ENCODE measurements at regions of chr7 and their contacts with region 1.

Region 1: DNA sequence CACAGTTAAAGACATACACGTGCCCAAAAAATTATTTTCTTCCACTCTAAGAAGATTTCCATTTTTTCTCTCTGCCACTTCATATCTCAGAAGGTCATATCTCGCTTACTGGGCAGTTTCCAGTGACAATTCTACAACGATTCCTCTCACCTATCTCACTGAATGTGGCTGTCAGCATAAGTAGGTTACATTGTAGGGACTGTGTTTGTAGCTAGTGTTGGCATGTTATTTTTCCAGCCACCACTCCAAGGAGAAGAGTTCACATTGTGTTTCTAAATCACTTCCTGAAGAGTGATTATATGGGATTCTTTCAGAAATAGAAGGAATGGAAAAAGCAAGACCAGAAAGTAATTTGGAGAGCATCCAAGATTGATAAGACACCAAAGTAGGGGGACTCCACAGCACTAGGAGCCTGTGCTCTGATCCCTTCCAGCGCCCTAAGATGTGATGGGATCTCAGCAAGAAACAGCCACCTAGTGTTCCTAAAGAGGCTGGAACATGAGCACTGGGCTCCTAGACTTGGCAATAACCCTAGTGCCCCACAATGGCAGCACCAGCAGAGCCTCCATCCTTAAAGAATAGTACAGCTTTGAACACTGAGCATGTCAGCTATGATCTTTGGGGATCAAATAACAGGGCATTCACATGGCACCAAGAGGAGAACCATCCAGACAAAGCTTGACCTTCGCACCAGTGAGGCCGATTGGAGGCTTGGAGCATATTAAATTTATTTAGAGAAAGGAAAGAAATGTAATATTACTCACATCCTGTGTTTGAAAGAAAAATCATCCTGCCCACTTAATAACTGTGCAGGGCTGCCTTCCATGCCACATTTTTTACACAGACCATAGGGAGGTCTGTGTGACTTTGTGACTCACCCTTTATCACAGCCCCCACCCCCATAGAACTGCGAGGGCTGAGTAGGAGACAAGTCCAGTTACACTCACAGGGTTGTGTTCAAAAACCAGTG is 51.8 kb downstream of the CAV1 start:
- DNase-seq: no peak
- H3K4me3 Mint-ChIP-seq: no peak overlapping the region
- H3K27ac Mint-ChIP-seq: no peak overlapping the region
- H3K4me1 Mint-ChIP-seq: peaks cover 17% of the 10 kb centered on the region
- H3K27me3 Mint-ChIP-seq: peaks cover 4% of the 10 kb centered on the region

Region 2: DNA sequence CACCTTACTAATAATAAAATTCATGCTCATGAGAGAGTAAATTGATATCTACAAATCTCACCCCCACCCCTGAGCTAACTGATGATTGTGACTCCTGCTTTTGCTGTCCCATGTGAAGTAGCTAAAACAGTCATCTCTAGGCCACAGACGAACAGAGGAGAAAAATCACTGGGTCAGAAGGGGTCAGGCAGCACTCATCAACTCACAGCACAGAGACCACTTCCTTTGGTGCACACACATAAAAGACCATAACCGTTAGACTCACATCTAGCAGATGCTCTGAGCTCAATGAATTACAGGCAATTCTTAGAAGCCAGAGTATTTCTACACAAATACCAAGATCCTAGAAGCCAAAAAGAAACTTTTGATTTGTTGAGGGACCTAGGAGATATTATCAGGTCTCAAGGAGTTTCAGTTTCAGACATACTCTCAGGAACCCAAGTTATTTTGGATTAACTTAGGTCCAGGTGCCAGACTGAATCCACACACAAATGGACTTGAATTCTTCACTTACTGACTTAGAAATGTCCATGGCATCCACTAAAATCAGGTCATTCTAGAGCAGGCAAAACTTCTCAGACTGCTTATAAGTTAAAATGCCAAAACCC is 431.3 kb before region 1 on chr7:
- intact Hi-C with region 1: loop called (anchors 2 kb)
- DNase-seq: peak; percentile 37
- H3K4me3 Mint-ChIP-seq: peak overlapping the region; percentile 41
- H3K27ac Mint-ChIP-seq: peak overlapping the region; percentile 79
- H3K4me1 Mint-ChIP-seq: peaks cover 54% of the 10 kb centered on the region
- H3K27me3 Mint-ChIP-seq: no peaks in the 10 kb centered on the region

Region 3: DNA sequence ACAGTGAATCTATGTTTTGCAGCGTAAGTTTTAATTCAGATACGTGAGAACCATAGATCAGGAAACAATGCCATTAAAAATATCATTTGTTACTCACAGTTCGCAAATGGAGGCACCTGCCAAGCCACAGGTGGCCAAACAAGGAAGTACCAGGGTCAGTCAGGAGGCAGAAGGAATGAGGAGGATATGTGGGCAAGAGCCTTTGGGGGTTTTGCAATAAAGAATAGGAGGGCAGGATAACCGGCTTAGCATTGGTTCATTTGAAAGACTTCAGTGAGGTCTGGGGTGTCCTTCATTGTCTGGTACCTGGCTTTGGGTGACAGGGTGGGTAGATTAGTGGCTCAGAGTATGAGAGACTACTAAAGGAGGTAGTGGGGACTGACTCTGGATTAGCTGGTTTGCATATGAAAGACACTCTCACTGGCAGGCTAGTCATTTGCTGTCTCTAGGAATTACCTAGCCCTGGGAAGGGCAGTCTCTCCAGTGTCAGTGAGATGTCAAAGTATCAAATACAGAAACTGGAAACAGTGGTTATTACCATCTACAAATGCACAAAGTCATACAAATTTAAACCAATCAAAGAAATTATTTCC is 209.3 kb before region 1 on chr7:
- intact Hi-C with region 1: no loop called
- DNase-seq: no peak
- H3K4me3 Mint-ChIP-seq: no peak overlapping the region
- H3K27ac Mint-ChIP-seq: no peak overlapping the region
- H3K4me1 Mint-ChIP-seq: no peaks in the 10 kb centered on the region
- H3K27me3 Mint-ChIP-seq: no peaks in the 10 kb centered on the region

Region 4: DNA sequence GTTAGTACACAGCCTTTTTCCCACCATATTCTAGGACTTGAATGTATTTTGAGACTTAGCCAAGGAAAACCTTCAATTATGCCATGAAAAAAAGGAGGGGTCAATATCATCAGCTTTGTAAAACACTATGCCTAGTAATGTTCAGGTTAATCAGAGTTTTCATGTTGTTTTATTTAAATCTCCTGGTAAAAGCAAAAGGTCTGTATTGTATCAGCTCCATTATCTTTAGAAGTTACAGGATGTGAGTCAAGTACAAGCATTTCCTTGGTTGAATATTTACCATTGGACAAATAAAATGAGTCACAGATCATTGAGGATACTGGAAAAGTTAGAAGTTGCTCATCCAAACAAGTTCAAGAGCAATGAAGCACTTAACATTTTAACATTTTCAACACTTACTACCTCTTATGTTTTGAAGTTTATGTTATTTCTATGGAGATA is 195.8 kb after region 1 on chr7:
- intact Hi-C with region 1: no loop called
- DNase-seq: no peak
- H3K4me3 Mint-ChIP-seq: no peak overlapping the region
- H3K27ac Mint-ChIP-seq: no peak overlapping the region
- H3K4me1 Mint-ChIP-seq: peaks cover 3% of the 10 kb centered on the region
- H3K27me3 Mint-ChIP-seq: peaks cover 14% of the 10 kb centered on the region

Measured in activated T-helper 2 cell treated with anti-CD3 and anti-CD28 coated beads, Interferon-gamma antibody, Interleukin-2, Interleukin-4, amounts not matched to agents 10 μg/mL and 5 μg/mL and 100 μg/mL, durations not matched to agents 14 hours and 24 hours and 36 hours (primary cell).